ENCODE measurements at regions of chr10 and their contacts with region 1.

Region 1: GRCh38 chr10:43689955-43690771 is 41.5 kb upstream of the ZNF32 start:
- DNase-seq: peak; percentile 89
- ATAC-seq: peak; percentile 98 to 99

Region 2: GRCh38 chr10:43863859-43864591 is 173.9 kb after region 1 on chr10:
- intact Hi-C with region 1: loop called in 1 of 2 experiments (anchors 10 kb)
- DNase-seq: peak; percentile 55
- ATAC-seq: peak; percentile 66 to 85

Region 3: GRCh38 chr10:43905512-43906236 is 215.5 kb after region 1 on chr10:
- intact Hi-C with region 1: loop called in 1 of 2 experiments (anchors 10 kb)
- DNase-seq: peak; percentile 64
- ATAC-seq: peak; percentile 64 to 73

Region 4: GRCh38 chr10:44020322-44021111 is 330.4 kb after region 1 on chr10:
- intact Hi-C with region 1: no loop called
- DNase-seq: no peak
- ATAC-seq: peak; percentile 67 to 71

Region 5: DNA sequence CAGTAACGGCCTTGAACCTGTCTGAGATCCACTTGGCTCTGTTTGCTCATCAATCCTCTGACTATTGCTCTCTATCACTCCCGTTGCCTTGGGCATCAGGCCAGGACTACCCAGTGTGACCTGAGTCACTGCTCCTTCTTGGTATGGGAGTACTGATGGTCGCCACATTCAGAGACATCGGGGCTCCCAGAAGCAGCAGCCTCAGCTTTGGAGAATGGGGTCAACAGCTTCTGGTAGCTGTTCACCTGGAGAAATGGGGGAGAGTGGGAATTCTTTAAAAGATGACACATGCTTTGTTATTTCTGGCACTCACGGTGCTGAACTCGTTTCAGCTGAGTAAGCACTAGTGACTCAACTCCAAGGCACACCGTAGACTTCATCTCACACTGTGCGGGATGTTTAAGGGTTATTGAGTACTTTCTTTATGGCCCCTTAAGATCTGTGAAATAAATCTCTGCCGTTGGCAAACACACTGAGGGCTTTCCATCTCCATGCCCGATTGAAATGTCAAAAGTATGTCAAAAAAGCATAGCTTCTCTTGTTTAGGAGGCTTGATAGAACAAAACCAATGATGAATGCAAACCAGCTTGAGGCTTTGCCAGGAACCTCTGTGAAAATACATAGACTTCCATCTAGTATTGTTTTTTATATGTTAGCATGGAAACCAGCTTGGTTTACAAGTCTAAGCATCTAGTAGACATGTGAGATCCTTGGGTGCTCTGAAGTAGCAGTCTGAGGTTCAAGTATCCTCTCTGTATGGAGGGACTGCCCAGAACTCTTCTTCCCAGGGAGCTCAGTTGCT is 361.6 kb after region 1 on chr10:
- intact Hi-C with region 1: loop called in 1 of 2 experiments (anchors 10 kb)
- DNase-seq: no peak
- ATAC-seq: peak in 1 of 2 donors; percentile 70

Region 6: GRCh38 chr10:44310762-44311562 is 620.8 kb after region 1 on chr10:
- intact Hi-C with region 1: loop called (anchors 2 to 10 kb)
- DNase-seq: peak; percentile 90
- ATAC-seq: peak; percentile 99

Region 7: DNA sequence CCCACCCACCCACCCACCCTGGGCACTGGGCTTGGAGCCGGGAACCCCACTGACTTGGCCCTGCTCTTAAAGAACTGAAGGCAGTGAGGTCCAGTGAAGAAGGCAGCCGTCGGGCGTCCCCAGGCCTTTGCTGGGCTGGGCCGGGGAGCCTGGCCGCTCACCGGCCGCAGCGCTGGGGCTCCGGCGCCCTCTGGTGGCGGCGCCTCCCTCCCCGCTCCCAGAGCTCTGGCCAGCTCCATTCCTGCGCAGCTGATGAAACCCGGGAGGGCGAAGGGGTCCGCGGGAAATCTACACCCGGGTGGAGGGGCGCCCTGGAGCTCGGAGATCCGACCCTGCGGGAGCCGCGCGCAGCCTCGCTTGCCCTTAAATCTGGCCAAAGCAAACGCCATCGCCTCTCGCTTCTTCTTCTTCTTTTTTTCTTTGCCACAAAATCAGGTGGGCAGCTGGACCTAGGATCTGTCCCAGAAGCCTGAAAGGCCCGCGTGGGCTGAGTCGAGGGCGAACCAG is 696.4 kb after region 1 on chr10:
- intact Hi-C with region 1: loop called in 1 of 2 experiments (anchors 5 kb)
- DNase-seq: peak; percentile 69
- ATAC-seq: peak; percentile 80 to 81